HEK293 (cell line): ENCODE measurements at regions of chr19 and their contacts with region 1.

Region 1: GRCh38 chr19:39792999-39793546 is 14.4 kb downstream of the LEUTX start:
- H3K4me3 ChIP-seq: peak overlapping the region; percentile 29
- H3K27ac ChIP-seq: no peak overlapping the region
- H3K4me1 ChIP-seq: no peaks in the 10 kb centered on the region
- CTCF ChIP-seq: peak; percentile 99

Region 2: GRCh38 chr19:39765091-39766076 is 27.7 kb before region 1 on chr19:
- CTCF ChIA-PET with region 1: interaction called, 18 read pairs
- POLR2A ChIA-PET with region 1: no interaction called
- H3K4me3 ChIP-seq: no peak overlapping the region
- H3K27ac ChIP-seq: no peak overlapping the region
- H3K4me1 ChIP-seq: peaks cover 6% of the 10 kb centered on the region
- CTCF ChIP-seq: peak; percentile 31; the same call in 1 of the 2 replicates

Region 3: DNA sequence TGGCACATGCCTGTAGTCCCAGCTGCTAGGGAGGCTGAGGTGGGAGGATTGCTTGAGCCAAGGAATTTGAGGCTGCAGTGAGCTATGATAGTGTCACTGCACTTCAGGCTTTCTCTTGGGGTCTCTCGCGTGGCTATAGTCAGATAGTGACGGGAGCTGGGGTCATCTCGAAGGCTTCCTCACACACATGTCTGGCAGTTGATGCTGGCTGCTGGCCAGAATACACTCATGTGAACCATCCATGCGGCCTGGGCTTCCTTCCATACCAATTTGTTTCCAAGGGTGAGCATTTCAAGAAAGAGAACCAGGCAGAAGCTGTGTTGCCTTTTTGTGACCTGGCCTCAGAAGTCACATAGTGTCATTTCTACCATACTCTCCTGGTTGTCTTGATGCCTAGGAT is 12.0 kb after region 1 on chr19:
- CTCF ChIA-PET with region 1: interaction called, 109 read pairs
- POLR2A ChIA-PET with region 1: interaction called, 4 read pairs
- H3K4me3 ChIP-seq: no peak overlapping the region
- H3K27ac ChIP-seq: no peak overlapping the region
- H3K4me1 ChIP-seq: 0 out of 2 replicates have a peak, but pooled peaks cover 3% of the 10 kb centered on the region
- CTCF ChIP-seq: no peak

Region 4: GRCh38 chr19:39824143-39825092 is 31.3 kb after region 1 on chr19:
- CTCF ChIA-PET with region 1: interaction called, 22 read pairs
- POLR2A ChIA-PET with region 1: interaction called, 6 read pairs
- H3K4me3 ChIP-seq: peak overlapping the region; percentile 59
- H3K27ac ChIP-seq: peak overlapping the region; percentile 75
- H3K4me1 ChIP-seq: peaks cover 12% of the 10 kb centered on the region
- CTCF ChIP-seq: no peak

Region 5: GRCh38 chr19:40139533-40140287 is 346.6 kb after region 1 on chr19:
- CTCF ChIA-PET with region 1: interaction called, 13 read pairs
- POLR2A ChIA-PET with region 1: no interaction called
- H3K4me3 ChIP-seq: no peak overlapping the region
- H3K27ac ChIP-seq: no peak overlapping the region
- H3K4me1 ChIP-seq: no peaks in the 10 kb centered on the region
- CTCF ChIP-seq: peak; percentile 89